A549 (cell line): ENCODE measurements at regions of chr2 and their contacts with region 1.

Region 1: GRCh38 chr2:127807678-127808353 is 3.2 kb downstream of the WDR33 start:
- DNase-seq: no peak
- ATAC-seq: no peak
- H3K4me3 ChIP-seq: no peak overlapping the region
- H3K27ac ChIP-seq: no peak overlapping the region
- H3K4me1 ChIP-seq: peaks cover 35% of the 10 kb centered on the region
- CTCF ChIP-seq: no peak
- EP300 ChIP-seq: no peak
- POLR2A ChIP-seq: no peak
- RAD21 ChIP-seq: no peak

Region 2: DNA sequence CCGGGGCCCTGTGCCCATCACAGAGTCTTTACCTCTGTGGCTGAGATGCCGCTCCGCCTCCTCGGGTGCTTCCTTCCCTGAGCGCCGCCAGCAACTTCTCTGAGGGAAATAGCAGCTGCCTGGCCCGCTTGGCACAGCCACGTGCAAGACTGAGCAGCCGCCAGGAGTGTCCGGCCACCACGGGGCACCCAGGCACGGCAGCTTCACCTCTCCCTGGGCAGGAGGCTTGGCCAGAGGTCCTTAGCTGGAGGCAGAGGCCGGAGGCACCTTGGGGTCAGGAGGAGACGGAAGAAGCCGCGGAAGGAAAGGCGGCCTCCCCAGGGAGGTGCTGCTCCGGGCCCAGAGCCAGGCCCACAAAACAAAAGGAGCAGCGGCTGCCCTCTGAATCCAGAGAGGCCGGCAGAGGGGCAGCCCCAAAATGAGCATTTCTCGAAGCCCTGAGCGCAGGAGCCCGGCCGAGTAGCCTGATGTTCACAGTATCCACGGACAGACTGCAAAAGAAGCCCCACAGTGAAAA is 126.5 kb before region 1 on chr2:
- CTCF ChIA-PET with region 1: no interaction called
- POLR2A ChIA-PET with region 1: no interaction called
- DNase-seq: no peak
- ATAC-seq: no peak
- H3K4me3 ChIP-seq: no peak overlapping the region
- H3K27ac ChIP-seq: no peak overlapping the region
- H3K4me1 ChIP-seq: no peaks in the 10 kb centered on the region
- CTCF ChIP-seq: no peak
- EP300 ChIP-seq: no peak
- POLR2A ChIP-seq: no peak
- RAD21 ChIP-seq: no peak

Region 3: DNA sequence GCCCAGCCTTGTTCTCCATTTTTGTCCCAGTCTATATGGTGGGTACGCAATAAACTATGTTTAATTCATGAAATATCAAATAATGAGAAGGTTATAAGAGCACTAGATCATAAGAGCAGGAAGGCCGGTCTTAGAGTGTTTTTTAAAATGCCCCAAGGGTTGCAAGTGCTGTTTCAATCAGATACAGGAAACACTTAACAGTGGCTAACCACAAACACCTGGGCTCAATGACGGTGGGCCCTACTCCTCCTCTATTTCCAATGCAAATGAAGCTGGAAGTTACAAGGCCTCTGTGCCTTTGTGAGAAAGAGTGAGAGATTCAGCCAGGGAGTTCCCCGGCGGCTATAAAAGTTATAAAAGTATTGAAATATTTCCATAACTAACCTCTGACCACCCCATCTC is 22.0 kb after region 1 on chr2:
- CTCF ChIA-PET with region 1: no interaction called
- POLR2A ChIA-PET with region 1: interaction called, 10 read pairs
- DNase-seq: no peak
- ATAC-seq: no peak
- H3K4me3 ChIP-seq: no peak overlapping the region
- H3K27ac ChIP-seq: no peak overlapping the region
- H3K4me1 ChIP-seq: no peaks in the 10 kb centered on the region
- CTCF ChIP-seq: no peak
- EP300 ChIP-seq: no peak
- POLR2A ChIP-seq: no peak
- RAD21 ChIP-seq: no peak

Region 4: DNA sequence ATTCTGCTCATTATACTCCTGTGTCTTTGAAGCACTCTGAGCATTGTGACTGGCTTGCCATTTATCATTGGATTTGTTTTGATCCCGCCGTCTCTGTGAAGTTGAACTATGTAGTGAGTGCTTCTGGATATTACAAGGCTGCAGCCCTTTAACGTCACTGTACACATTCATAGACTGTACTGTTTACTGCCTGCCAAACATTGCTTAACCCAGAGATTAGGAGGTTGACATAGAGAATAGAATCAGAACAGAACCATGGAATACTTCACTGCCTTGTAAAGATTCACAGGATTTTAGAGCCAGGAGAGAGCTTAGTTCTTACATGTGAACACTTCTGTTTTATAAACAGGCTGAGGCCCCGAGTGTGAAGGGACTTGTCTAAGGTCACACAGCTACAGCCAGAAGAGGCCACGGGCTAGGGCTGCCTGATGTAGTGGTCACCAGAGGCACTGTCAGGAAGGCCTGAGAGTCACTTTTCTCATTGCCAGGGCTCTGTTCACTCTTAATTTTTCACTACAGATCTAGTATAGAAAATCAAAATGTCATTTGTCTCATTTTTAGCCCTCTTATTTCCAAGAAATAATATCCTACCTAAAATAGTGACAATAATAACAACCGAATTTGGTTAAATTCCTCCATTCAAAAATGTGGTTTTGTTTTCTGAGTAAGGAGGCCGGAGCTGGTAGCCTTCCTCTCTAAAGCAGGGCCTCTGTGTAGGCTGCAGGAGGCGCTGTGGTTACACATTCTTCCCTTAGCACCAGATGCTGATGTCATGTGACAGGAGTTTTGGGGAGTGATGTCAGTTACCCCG is 371.0 kb after region 1 on chr2:
- CTCF ChIA-PET with region 1: no interaction called
- POLR2A ChIA-PET with region 1: no interaction called
- DNase-seq: peak; percentile 28 to 72
- ATAC-seq: peak; percentile 83 to 95; a peak in 4 of 6 replicates
- H3K4me3 ChIP-seq: no peak overlapping the region
- H3K27ac ChIP-seq: no peak overlapping the region
- H3K4me1 ChIP-seq: no peaks in the 10 kb centered on the region
- CTCF ChIP-seq: peak; percentile 71
- EP300 ChIP-seq: no peak
- POLR2A ChIP-seq: no peak
- RAD21 ChIP-seq: peak; percentile 73 to 75